Natural killer cell (primary cell): ENCODE measurements at regions of chr10 and their contacts with region 1.

Region 1: DNA sequence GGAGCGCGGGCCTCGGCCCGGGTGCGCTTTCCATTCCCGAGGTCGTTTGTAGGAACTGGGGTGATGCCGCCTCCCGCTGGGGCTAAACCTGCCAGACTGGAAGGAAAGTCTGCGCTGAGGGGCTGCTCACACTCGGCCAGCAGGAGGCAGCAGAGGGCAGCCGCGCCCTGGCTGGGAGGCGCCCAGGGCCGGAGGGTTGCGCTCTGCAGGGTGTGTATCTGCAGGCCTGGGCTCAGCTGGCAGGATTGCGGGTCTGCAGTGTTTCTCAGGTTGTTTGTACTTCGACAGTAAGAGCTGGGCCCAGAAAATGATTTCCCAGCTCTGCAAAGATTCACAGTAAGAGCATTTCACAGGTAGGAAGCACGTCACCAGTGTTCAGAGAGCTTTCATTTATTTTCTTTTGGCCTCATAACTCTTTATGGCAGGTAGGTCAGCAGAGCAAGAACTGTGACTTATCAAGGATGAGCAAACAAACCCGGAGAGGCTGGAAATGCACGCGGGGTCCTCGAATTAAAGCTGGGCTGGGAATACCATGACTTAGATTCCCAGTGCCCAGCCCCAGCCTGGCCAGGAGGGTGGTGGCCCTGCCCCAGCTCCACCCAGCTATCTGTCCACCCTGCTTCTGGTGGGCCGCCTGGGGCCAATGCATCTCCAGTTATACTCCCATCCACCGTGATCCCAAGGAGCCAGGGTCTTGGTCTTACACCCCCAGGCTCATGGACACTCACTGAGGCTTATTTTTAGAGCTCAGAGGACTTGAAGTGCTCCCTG is 15.2 kb upstream of the PPP2R2D start:
- DNase-seq: peak; percentile 81 to 89
- ATAC-seq: peak; percentile 93 to 99 (median 98)
- H3K4me3 ChIP-seq: no peak overlapping the region
- H3K4me3 Mint-ChIP-seq: no peak overlapping the region
- H3K27ac ChIP-seq: no peak overlapping the region
- H3K27ac Mint-ChIP-seq: no peak overlapping the region
- H3K4me1 ChIP-seq: peaks cover 6% of the 10 kb centered on the region
- H3K4me1 Mint-ChIP-seq: peaks cover 4 to 9% of the 10 kb centered on the region in 2 donors
- H3K27me3 ChIP-seq: no peaks in the 10 kb centered on the region
- H3K27me3 Mint-ChIP-seq: peaks cover 0 to 6% of the 10 kb centered on the region in 2 donors
- CTCF ChIP-seq: peak; percentile 96

Region 2: DNA sequence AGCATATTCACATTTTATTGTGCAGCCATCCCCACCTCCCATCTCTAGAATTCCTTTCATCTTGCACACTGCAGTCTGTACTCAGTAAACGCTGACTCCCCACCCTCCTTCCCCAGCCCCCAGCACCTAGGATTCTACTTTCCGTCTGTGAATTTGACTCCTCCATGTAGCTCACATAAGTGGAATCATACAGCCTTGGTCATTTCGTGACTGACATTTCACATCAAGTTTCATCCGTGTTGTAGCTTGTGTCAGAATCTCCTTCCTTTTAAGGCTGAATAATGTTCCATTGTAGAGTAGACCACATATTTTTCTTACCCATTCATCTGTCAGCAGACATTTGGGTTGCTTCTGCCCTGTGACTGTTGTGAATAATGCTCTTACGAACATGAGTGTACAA is 547.8 kb before region 1 on chr10:
- intact Hi-C with region 1: no loop called
- DNase-seq: no peak
- ATAC-seq: no peak
- H3K4me3 ChIP-seq: no peak overlapping the region
- H3K4me3 Mint-ChIP-seq: no peak overlapping the region
- H3K27ac ChIP-seq: no peak overlapping the region
- H3K27ac Mint-ChIP-seq: no peak overlapping the region
- H3K4me1 ChIP-seq: no peaks in the 10 kb centered on the region
- H3K4me1 Mint-ChIP-seq: no peaks in the 10 kb centered on the region
- H3K27me3 ChIP-seq: no peaks in the 10 kb centered on the region
- H3K27me3 Mint-ChIP-seq: peaks cover 0 to 17% of the 10 kb centered on the region in 2 donors
- CTCF ChIP-seq: no peak

Region 3: DNA sequence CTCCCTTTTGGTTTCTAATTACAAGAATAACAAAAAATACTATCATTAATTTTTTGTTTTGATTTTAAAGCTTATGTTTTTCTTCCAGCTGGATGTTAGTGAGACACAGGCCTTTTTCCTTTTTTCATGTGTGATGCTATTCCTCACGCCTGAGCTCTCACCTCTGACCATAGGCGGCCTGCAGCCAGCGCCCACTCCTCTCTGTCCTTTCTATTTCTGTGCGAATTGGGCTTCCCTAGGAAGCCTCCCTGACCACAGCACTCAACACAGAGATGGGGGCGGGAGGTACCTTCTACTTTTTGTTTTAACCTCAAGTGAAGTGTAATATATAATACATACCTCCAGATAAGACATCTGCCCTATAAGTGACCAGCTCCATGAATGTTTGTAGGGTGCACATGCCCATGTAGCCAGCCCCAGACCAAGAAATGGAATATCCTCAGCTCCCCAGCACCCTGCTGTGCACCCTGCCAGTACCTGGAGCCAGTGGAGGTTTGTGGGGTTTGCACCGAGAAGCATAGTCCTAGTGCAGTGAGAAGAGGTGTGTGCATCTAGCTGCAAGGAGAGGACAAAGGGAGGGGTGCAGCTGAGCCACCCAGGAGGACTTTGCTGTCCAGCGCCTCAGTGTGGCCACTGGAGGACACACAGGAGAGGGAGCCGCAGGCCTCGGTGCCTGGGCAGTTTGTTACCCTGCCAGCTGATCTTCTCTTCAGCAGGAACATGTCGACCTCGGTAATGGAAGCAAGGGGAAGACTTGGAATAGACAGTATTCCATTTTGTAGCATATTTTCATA is 57.6 kb after region 1 on chr10:
- intact Hi-C with region 1: loop called (anchors 1 kb)
- DNase-seq: peak in 1 of 2 donors; percentile 48
- ATAC-seq: peak; percentile 60 to 76 (median 73)
- H3K4me3 ChIP-seq: no peak overlapping the region
- H3K4me3 Mint-ChIP-seq: no peak overlapping the region
- H3K27ac ChIP-seq: no peak overlapping the region
- H3K27ac Mint-ChIP-seq: peak overlapping the region; percentile 25 to 53
- H3K4me1 ChIP-seq: no peaks in the 10 kb centered on the region
- H3K4me1 Mint-ChIP-seq: peaks cover 8 to 10% of the 10 kb centered on the region in 2 donors
- H3K27me3 ChIP-seq: no peaks in the 10 kb centered on the region
- H3K27me3 Mint-ChIP-seq: no peaks in the 10 kb centered on the region
- CTCF ChIP-seq: peak; percentile 35

Region 4: DNA sequence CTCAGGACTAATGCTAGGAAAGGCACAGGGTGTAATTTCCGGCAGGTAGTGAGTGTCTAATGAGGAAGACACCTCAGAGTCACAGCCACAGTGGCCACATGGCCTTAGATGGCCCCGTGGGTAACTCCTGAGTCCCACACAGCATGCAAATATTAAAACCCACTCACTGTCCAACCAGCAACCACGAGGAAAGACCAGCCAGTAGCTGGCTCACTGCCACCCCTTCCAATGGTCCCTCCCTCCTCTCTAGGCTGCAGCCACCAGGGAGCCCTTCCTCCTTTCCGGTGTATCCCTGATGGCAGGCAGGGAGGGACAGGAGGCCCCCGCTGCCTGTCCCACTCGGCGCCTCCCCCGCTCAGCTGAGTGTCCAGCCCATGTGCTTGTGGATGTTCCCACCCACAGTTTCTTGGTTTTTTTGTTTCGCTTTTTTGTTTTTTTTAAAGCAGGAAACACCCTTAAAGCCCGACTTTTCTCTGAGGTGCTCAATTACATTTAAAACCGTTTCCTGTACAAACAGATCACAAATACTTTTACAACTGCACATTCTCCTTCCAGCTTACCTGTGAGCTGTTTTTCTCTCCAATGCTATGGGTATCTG is 87.0 kb after region 1 on chr10:
- intact Hi-C with region 1: no loop called
- DNase-seq: peak in 1 of 2 donors; percentile 69
- ATAC-seq: peak; percentile 48 to 76 (median 74)
- H3K4me3 ChIP-seq: no peak overlapping the region
- H3K4me3 Mint-ChIP-seq: peak overlapping the region; percentile 79
- H3K27ac ChIP-seq: peak overlapping the region; percentile 21
- H3K27ac Mint-ChIP-seq: peak overlapping the region; percentile 81 to 87
- H3K4me1 ChIP-seq: peaks cover 22% of the 10 kb centered on the region
- H3K4me1 Mint-ChIP-seq: peaks cover 40 to 55% of the 10 kb centered on the region in 2 donors
- H3K27me3 ChIP-seq: no peaks in the 10 kb centered on the region
- H3K27me3 Mint-ChIP-seq: no peaks in the 10 kb centered on the region
- CTCF ChIP-seq: no peak

Region 5: DNA sequence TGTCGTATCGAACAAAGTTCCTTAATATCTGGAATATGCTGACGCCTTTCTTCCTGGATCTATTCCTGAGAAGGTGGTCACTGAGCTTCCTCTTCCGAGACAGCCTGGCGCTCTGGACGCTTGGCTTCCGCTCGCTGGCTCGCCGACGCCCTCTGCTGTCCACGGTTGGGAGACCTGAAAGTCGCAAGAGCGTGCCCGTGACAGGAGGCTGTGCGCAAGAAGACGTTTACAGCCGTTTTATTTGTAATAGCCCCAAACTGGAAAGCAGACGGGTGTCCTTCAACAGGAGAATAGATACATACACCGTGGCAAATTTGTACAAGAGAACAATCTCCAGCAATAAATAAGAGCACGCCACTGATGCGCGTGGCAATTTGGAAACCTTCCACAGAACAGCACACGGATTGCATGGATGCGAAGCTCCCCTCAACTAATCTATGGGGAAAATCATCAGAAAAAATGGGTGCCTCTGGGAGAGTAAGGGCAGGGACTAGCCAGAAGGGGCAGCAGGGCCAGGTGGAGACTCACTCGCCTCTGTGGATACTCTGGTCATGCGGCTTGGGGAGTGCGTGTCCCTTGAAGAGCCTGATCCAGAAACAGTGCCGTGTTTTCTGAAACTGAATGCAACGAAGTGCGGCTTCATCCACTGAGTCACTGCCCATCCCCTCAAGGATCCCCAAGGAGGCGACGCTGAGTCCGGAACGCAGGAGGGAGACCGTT is 137.7 kb after region 1 on chr10:
- intact Hi-C with region 1: loop called (anchors 1 kb)
- DNase-seq: peak; percentile 71 to 86
- ATAC-seq: peak; percentile 70 to 95 (median 93)
- H3K4me3 ChIP-seq: no peak overlapping the region
- H3K4me3 Mint-ChIP-seq: peak overlapping the region; percentile 54
- H3K27ac ChIP-seq: no peak overlapping the region
- H3K27ac Mint-ChIP-seq: no peak overlapping the region
- H3K4me1 ChIP-seq: peaks cover 7% of the 10 kb centered on the region
- H3K4me1 Mint-ChIP-seq: peaks cover 7% of the 10 kb centered on the region in 2 donors
- H3K27me3 ChIP-seq: peaks cover 6% of the 10 kb centered on the region
- H3K27me3 Mint-ChIP-seq: peaks cover 23 to 37% of the 10 kb centered on the region in 2 donors
- CTCF ChIP-seq: peak; percentile 87

Region 6: DNA sequence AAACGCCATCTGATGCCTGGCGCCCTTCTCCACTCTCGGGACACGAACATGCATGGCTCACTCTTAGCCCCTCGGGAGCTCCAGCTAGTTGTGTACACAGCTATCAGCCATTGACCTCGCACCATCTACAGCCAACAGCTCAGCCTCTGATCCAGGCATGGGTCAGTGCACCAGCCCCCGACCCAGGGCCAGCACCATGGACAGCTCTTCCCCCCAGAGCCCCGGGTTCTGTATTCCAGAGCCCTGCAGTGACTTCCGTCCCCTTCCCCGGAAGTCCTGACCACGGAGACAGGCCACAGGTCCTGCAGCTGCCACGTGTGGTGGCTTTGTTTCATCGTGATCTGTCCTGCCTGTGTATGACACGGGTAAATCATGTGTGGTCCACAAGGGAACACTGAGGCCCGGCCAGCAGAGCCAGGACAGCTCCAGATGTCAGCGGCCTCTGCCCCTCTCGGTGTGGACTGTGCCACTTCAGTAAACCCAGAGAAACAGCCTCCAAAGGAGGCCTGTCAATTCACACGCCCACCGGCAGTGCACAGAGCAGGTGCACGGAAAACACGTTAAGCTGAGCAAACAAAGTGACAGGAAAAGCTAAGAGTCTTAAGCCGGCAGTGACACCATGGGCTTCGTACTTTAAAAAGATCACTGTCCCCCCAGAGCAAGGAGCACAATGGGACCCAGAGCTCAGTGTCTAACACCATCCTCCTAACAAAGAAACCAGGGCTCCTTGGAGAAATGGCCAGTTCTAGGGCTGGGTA is 409.2 kb after region 1 on chr10:
- intact Hi-C with region 1: no loop called
- DNase-seq: no peak
- ATAC-seq: no peak
- H3K4me3 ChIP-seq: no peak overlapping the region
- H3K4me3 Mint-ChIP-seq: no peak overlapping the region
- H3K27ac ChIP-seq: no peak overlapping the region
- H3K27ac Mint-ChIP-seq: no peak overlapping the region
- H3K4me1 ChIP-seq: no peaks in the 10 kb centered on the region
- H3K4me1 Mint-ChIP-seq: peaks cover 18 to 24% of the 10 kb centered on the region in 2 donors
- H3K27me3 ChIP-seq: no peaks in the 10 kb centered on the region
- H3K27me3 Mint-ChIP-seq: peaks cover 0 to 3% of the 10 kb centered on the region in 2 donors
- CTCF ChIP-seq: no peak

Region 7: DNA sequence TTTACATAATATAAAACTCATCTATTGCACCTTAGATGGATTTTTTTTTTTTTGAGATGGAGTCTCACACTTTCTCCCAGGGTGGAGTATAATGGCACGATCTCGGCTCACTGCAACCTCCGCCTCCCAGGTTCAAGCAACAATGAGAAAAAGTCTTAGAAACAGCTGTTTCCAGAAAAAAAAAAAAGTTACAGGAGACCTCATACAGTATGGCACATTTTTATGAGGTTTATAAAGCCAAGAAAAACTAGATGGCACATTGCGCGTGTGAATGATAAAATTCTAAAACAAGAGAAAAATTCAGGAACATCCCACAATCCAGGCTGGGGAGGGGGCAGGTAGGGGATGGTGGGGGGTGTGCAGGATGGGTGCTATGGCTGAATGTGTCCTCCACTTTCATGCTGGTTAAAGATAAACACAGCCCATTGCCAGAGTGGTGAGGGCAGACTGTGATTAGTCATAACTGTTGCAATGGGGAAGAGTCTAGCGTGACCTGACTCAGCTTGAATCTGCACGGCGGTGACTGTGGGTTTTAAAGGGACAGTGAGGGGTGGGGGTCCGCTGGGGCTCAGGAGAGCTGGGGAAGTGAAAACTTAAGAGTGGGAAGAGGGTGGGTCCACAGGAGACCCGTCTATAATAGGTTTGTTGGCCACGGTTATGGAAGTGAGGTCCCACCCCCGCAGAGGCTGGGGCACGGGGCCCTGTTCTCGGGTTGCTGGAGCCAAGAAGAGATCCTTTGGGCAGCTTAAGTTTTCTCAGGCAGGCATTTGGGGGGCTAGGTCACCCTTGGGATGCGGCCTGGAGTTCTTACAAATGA is 434.5 kb after region 1 on chr10:
- intact Hi-C with region 1: no loop called
- DNase-seq: no peak
- ATAC-seq: peak; percentile 44 to 60 (median 49)
- H3K4me3 ChIP-seq: no peak overlapping the region
- H3K4me3 Mint-ChIP-seq: no peak overlapping the region
- H3K27ac ChIP-seq: no peak overlapping the region
- H3K27ac Mint-ChIP-seq: no peak overlapping the region
- H3K4me1 ChIP-seq: peaks cover 3% of the 10 kb centered on the region
- H3K4me1 Mint-ChIP-seq: peaks cover 0 to 15% of the 10 kb centered on the region in 2 donors
- H3K27me3 ChIP-seq: no peaks in the 10 kb centered on the region
- H3K27me3 Mint-ChIP-seq: no peaks in the 10 kb centered on the region
- CTCF ChIP-seq: no peak